Activated CD4-positive, alpha-beta T cell treated with anti-CD3 and anti-CD28 coated beads for 36 hours (primary cell): ENCODE measurements at regions of chr1 and their contacts with region 1.

Region 1: DNA sequence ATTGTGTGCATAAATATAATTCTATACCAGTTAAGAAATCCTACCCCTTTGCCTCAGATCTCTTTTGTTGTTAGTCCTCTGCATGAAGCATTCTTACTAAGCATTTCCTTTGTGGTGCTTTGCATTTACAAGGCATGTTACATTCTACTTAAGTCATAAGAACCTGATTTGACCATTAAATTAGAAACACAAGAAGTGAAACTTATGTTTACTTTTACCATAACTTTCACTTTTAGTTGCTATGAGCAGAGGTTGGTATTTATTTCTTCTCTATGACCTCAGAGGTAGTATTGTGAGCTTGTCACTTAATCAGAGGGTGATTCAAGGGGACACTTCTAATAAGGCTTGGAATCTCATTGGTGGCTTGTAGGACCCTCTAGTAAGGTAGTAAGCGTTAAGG is 9.0 kb downstream of the FAM20B start:
- DNase-seq: no peak
- ATAC-seq: peak; percentile 80
- H3K4me3 Mint-ChIP-seq: no peak overlapping the region
- H3K27ac Mint-ChIP-seq: peak overlapping the region; percentile 84
- H3K4me1 Mint-ChIP-seq: peaks cover 85% of the 10 kb centered on the region
- H3K27me3 Mint-ChIP-seq: no peaks in the 10 kb centered on the region

Region 2: DNA sequence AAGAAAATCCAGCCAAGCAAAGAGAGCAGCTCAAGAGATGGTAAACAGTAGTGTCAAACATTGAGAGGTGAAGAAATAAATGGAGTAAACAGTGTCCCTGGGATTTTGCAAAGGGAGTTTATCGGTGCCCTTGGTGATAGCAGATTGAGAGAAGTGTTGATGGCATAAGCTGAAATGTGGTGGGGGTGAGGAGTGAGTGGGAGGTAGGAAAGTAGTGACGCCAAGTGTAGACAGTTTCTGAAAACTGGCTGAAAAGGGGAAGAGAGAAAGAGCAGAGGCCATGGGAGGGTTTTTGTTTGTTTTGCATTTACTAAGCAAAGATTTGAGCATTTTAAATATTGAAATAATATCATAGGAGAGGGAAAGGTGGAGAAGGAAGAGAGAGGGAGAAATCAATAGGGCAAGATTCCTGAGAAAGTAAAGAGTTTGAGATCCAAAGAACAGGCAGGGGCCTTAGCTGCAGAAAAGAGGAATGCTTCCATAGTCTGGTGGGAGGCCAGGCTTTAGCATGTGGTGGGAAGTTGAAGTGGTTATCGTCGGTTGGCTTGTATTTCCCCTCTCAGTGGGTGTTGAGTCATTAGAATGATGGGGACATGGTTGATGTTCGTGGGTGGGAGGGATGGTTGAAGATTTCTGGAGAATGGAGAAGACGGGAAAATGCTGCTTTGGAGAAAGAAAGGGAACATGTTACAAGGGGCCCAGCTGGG is 967.7 kb before region 1 on chr1:
- CTCF ChIA-PET with region 1: no interaction called
- POLR2A ChIA-PET with region 1: no interaction called
- intact Hi-C with region 1: no loop called
- DNase-seq: no peak
- ATAC-seq: no peak
- H3K4me3 Mint-ChIP-seq: no peak overlapping the region
- H3K27ac Mint-ChIP-seq: no peak overlapping the region
- H3K4me1 Mint-ChIP-seq: no peaks in the 10 kb centered on the region
- H3K27me3 Mint-ChIP-seq: peaks cover 2% of the 10 kb centered on the region

Region 3: GRCh38 chr1:179229214-179230140 is 194.8 kb after region 1 on chr1 and contains the start of gene ABL2:
- CTCF ChIA-PET with region 1: no interaction called
- POLR2A ChIA-PET with region 1: no interaction called
- intact Hi-C with region 1: loop called (anchors 2 kb)
- DNase-seq: peak; percentile 71
- ATAC-seq: peak; percentile 21
- H3K4me3 Mint-ChIP-seq: peak within 1 kb of the TSS; percentile 86
- H3K27ac Mint-ChIP-seq: peak within 1 kb of the TSS; percentile 88
- H3K4me1 Mint-ChIP-seq: peaks cover 36% of the 10 kb centered on the region
- H3K27me3 Mint-ChIP-seq: no peaks in the 10 kb centered on the region
- total RNA-seq, gene ABL2: 6.6 to 8.4 TPM

Region 4: GRCh38 chr1:179327679-179328078 is 293.0 kb after region 1 on chr1:
- CTCF ChIA-PET with region 1: no interaction called
- POLR2A ChIA-PET with region 1: no interaction called
- intact Hi-C with region 1: no loop called
- DNase-seq: no peak
- ATAC-seq: no peak
- H3K4me3 Mint-ChIP-seq: no peak overlapping the region
- H3K27ac Mint-ChIP-seq: no peak overlapping the region
- H3K4me1 Mint-ChIP-seq: peaks cover 9% of the 10 kb centered on the region
- H3K27me3 Mint-ChIP-seq: no peaks in the 10 kb centered on the region